ENCODE measurements at regions of chr11 and their contacts with region 1.

Region 1: GRCh38 chr11:95611827-95612226 is 177.8 kb downstream of the FAM76B start:
- DNase-seq: no peak
- H3K4me3 ChIP-seq: no peak overlapping the region
- H3K27ac ChIP-seq: no peak overlapping the region
- H3K4me1 ChIP-seq: no peaks in the 10 kb centered on the region
- H3K27me3 ChIP-seq: peaks cover 0 to 2% of the 10 kb centered on the region in 2 experiments
- CTCF ChIP-seq: no peak
- POLR2A ChIP-seq: no peak

Region 2: GRCh38 chr11:95567685-95568084 is 44.1 kb before region 1 on chr11:
- CTCF ChIA-PET with region 1: no interaction called
- POLR2A ChIA-PET with region 1: no interaction called
- dilution Hi-C with region 1: no loop called
- intact Hi-C with region 1: no loop called
- DNase-seq: no peak
- H3K4me3 ChIP-seq: no peak overlapping the region
- H3K27ac ChIP-seq: no peak overlapping the region
- H3K4me1 ChIP-seq: no peaks in the 10 kb centered on the region
- H3K27me3 ChIP-seq: no peaks in the 10 kb centered on the region
- CTCF ChIP-seq: no peak
- POLR2A ChIP-seq: no peak

Region 3: GRCh38 chr11:95589893-95590612 is 21.8 kb before region 1 on chr11:
- CTCF ChIA-PET with region 1: no interaction called
- POLR2A ChIA-PET with region 1: no interaction called
- dilution Hi-C with region 1: no loop called
- intact Hi-C with region 1: loop called (anchors 1 kb)
- DNase-seq: no peak
- H3K4me3 ChIP-seq: no peak overlapping the region
- H3K27ac ChIP-seq: no peak overlapping the region
- H3K4me1 ChIP-seq: no peaks in the 10 kb centered on the region
- H3K27me3 ChIP-seq: no peaks in the 10 kb centered on the region
- CTCF ChIP-seq: no peak
- POLR2A ChIP-seq: no peak